CD4-positive, alpha-beta T cell (primary cell): ENCODE measurements at regions of chr1 and their contacts with region 1.

Region 1: GRCh38 chr1:198298640-198299039 is 141.8 kb downstream of the NEK7 start:
- DNase-seq: no peak
- ATAC-seq: no peak
- H3K4me3 ChIP-seq: no peak overlapping the region
- H3K4me3 Mint-ChIP-seq: no peak overlapping the region
- H3K27ac ChIP-seq: no peak overlapping the region
- H3K27ac Mint-ChIP-seq: no peak overlapping the region
- H3K4me1 ChIP-seq: no peaks in the 10 kb centered on the region
- H3K4me1 Mint-ChIP-seq: no peaks in the 10 kb centered on the region
- H3K27me3 ChIP-seq: no peaks in the 10 kb centered on the region
- H3K27me3 Mint-ChIP-seq: no peaks in the 10 kb centered on the region
- CTCF ChIP-seq: no peak

Region 2: DNA sequence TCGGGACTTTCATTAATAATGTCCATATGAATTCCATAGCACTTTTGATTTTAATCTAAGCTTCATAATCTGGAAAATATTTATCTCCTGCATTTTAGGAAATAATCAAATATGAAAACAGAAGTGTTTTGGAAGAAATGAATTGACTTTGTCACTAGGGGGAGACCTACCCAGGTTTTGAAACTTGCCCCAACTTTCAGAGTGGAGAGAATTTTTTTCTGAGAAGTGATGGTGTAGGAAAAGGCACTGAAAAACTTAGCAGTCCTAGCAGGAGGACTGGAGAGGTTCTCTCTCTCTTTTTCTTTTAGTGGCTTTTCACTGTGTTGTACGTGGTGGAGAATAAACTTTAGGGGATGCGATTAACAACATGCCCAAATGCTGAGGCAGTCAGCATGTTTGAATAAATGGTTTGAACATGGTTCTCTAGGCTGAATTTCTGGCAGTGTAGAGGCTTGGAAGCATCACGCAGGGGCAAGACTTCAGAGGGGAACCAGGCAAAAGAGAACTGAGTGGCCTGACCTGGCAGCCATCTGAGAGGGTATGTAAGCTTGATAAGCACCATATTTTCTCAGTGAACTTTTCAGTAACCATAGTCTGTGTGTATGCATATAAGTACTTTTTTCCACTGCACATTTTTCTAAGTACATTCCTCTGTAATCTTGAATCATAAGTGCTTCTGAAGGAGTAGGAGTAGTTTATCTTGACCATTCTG is 210.1 kb before region 1 on chr1:
- CTCF ChIA-PET with region 1: no interaction called
- POLR2A ChIA-PET with region 1: no interaction called
- intact Hi-C with region 1: no loop called
- DNase-seq: peak in 3 of 14 experiments; percentile 52 to 59 (median 56)
- ATAC-seq: no peak
- H3K4me3 ChIP-seq: no peak overlapping the region
- H3K4me3 Mint-ChIP-seq: no peak overlapping the region
- H3K27ac ChIP-seq: no peak overlapping the region
- H3K27ac Mint-ChIP-seq: no peak overlapping the region
- H3K4me1 ChIP-seq: no peaks in the 10 kb centered on the region
- H3K4me1 Mint-ChIP-seq: no peaks in the 10 kb centered on the region
- H3K27me3 ChIP-seq: no peaks in the 10 kb centered on the region
- H3K27me3 Mint-ChIP-seq: no peaks in the 10 kb centered on the region
- CTCF ChIP-seq: peak; percentile 80

Region 3: GRCh38 chr1:198423673-198424072 is 125.0 kb after region 1 on chr1:
- CTCF ChIA-PET with region 1: no interaction called
- POLR2A ChIA-PET with region 1: no interaction called
- intact Hi-C with region 1: no loop called
- DNase-seq: no peak
- ATAC-seq: no peak
- H3K4me3 ChIP-seq: no peak overlapping the region
- H3K4me3 Mint-ChIP-seq: no peak overlapping the region
- H3K27ac ChIP-seq: no peak overlapping the region
- H3K27ac Mint-ChIP-seq: no peak overlapping the region
- H3K4me1 ChIP-seq: no peaks in the 10 kb centered on the region
- H3K4me1 Mint-ChIP-seq: no peaks in the 10 kb centered on the region
- H3K27me3 ChIP-seq: no peaks in the 10 kb centered on the region
- H3K27me3 Mint-ChIP-seq: no peaks in the 10 kb centered on the region
- CTCF ChIP-seq: no peak

Region 4: DNA sequence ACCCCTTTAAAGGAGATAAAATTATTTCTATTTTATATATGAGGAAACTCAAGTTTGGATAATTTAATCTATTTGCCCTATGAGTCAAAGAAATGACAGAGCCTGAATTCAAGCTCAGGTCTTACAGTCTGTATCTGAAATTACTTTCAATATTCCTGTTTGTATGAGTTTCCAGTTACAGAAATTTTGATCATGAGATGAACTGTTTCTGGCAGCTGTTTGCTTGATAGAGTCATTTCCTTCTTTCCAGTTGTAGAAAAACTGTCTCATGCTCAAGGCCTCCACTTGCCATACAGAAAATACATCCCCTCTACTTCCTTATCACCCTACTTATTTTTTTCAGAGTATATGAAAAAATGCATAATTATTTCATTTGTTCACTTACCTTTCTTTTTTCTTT is 427.8 kb after region 1 on chr1:
- CTCF ChIA-PET with region 1: no interaction called
- POLR2A ChIA-PET with region 1: no interaction called
- intact Hi-C with region 1: loop called in 1 of 2 experiments (anchors 10 kb)
- DNase-seq: no peak
- ATAC-seq: no peak
- H3K4me3 ChIP-seq: no peak overlapping the region
- H3K4me3 Mint-ChIP-seq: no peak overlapping the region
- H3K27ac ChIP-seq: no peak overlapping the region
- H3K27ac Mint-ChIP-seq: peak overlapping the region; percentile 81
- H3K4me1 ChIP-seq: peaks cover 21% of the 10 kb centered on the region
- H3K4me1 Mint-ChIP-seq: peaks cover 77% of the 10 kb centered on the region
- H3K27me3 ChIP-seq: no peaks in the 10 kb centered on the region
- H3K27me3 Mint-ChIP-seq: no peaks in the 10 kb centered on the region
- CTCF ChIP-seq: no peak